ENCODE measurements at regions of chr19 and their contacts with region 1.

Region 1: DNA sequence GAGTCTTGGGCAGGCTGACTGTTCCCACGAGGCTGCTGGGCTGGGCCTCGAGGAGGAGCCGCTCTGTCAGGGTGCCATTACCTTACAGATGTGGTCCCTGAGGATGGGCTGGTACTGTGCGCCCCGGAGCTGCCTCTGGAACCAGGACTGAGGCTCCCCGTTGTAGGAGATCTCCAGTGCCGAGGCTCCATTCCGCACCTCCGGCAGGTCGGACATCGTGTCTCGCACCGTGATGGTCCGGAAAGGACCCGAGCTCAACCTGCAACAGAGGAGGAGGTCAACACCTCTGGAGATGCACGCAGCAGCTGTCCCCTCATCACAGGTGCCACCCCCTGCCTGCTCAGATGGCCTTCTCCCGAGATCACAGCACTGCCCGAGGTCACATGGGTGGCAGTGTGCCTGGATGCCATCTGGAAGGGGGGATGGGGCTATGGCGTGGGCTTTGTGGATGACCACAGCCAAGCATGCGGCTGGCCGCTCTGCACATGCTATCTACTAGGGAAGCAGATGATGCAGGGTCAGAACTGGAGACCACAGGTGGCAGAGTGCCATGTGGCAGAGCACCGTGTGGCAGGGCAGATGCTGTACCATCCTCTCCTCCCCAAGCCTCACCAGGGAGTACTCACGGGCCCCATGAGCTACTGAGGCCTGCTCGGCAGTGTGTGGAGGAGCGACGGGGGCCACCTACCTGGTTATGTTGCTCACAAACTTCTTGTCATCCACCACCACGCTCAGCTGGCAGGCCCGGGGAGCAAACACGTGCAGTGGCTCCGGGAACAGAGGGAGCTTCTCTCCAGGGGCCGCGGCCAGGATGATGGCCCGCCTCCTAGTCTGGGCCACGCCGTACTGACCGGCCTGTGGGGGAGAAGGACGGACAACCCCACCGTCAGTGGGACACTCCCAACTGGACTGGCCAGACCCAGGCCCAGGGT is 18.3 kb upstream of the EIF3G start:
- DNase-seq: peak; percentile 81
- H3K4me3 ChIP-seq: no peak overlapping the region
- H3K27ac ChIP-seq: peak overlapping the region in 1 of 2 experiments; percentile 99; a peak in 2 of 4 replicates
- H3K4me1 ChIP-seq: peaks cover 0 to 33% of the 10 kb centered on the region in 2 experiments; a peak in 1 of 4 replicates
- H3K27me3 ChIP-seq: no peaks in the 10 kb centered on the region
- CTCF ChIP-seq: no peak
- EP300 ChIP-seq: peak in 1 of 2 experiments; percentile 78; a peak in 2 of 4 replicates
- RAD21 ChIP-seq: no peak

Region 2: DNA sequence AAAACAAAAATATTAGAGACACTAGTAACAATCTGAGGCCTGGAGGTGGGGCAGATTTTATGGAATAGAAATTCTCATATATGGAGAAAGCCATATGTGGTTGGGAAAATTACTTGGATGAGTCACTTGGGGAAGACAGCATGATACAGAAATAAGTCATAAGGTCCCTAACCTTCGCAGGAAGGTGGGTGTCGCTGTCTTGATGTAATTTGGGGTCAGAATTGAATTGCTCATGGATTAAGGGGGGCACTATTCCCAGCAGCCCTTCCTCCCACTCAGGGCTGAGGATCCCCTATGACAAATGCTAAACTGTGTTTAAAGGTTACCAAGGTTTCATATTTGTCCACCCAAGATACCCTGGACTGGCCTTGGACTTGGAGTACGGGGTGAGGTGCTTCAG is 119.8 kb before region 1 on chr19:
- CTCF ChIA-PET with region 1: no interaction called
- POLR2A ChIA-PET with region 1: no interaction called
- DNase-seq: no peak
- H3K4me3 ChIP-seq: no peak overlapping the region
- H3K27ac ChIP-seq: no peak overlapping the region
- H3K4me1 ChIP-seq: no peaks in the 10 kb centered on the region
- H3K27me3 ChIP-seq: peaks cover 23% of the 10 kb centered on the region; the same call in 1 of the 2 replicates
- CTCF ChIP-seq: no peak
- EP300 ChIP-seq: no peak
- RAD21 ChIP-seq: no peak

Region 3: DNA sequence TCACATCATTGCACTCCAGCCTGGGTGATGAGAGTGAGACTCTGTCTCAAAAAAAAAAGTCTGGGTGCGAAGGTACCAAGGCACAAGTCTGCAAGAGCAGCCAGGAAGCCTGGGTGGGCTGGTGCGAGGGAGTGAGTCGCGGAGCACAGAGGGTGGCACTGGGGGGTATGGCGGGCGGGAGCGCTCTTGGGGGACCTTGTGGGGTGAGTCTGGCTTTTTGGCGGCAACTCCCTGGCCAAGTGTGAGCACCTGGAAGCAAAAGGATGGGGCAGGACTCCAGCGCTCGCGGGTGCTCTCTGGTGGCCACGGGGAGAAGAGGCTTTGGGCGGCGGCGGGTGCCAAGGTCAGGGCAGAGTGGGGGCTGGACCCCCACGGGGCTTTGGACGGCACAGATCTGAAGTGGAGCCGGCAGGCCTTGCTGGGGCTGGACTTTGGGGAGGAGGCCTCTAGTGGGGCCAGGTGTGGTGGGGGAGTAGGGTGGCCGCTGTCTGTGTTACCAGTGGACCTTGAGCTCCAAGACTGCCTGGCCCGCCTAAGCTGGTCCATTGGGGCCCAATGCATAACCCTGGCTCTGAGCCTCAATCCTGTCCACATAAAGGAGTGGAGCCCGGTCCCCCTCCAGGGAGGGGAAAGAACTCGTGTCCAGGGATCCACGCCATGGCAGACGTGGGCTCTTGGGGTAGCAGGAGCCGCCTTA is 25.0 kb before region 1 on chr19:
- CTCF ChIA-PET with region 1: interaction called, 3 read pairs
- POLR2A ChIA-PET with region 1: interaction called, 13 read pairs
- DNase-seq: peak; percentile 75
- H3K4me3 ChIP-seq: no peak overlapping the region; a peak in 1 of 4 replicates
- H3K27ac ChIP-seq: no peak overlapping the region; a peak in 1 of 4 replicates
- H3K4me1 ChIP-seq: peaks cover 0 to 5% of the 10 kb centered on the region in 2 experiments; a peak in 1 of 4 replicates
- H3K27me3 ChIP-seq: no peaks in the 10 kb centered on the region
- CTCF ChIP-seq: peak; percentile 52
- EP300 ChIP-seq: no peak
- RAD21 ChIP-seq: 0 out of 2 replicates have a peak, but pooled peaks have one; percentile 15

Region 4: DNA sequence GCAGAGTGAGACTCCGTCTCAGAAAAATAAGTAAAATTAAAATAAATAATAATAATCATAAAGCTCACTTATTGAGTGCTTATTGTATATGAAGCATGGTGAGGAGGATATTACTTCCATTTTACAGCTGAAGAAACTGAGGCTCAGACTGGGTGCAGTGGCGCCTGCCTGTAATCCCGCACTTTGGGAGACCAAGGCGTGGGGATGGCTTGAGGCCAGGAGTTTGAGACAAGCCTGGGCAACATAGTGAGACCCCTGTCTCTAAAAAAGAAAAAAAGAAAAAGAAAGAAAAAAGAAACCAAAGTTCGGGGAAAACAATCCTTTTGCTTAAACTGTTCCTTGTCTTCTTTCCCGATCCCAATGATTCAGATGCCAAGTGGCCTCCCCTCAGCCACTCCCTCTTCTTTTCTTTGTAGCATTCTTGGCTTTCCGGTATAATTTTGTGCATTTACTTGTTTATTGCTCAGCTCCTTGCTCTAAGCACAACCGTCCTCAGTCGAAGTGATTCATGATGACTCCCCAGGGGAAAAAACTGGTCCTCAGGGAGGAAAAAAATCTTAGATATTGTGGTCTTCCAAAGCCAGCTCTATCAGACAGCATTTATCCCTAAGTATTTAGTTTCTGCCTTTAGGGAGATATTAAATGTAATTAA is 17.4 kb before region 1 on chr19:
- CTCF ChIA-PET with region 1: interaction called, 11 read pairs
- POLR2A ChIA-PET with region 1: interaction called, 21 read pairs
- DNase-seq: no peak
- H3K4me3 ChIP-seq: no peak overlapping the region
- H3K27ac ChIP-seq: peak overlapping the region in 1 of 2 experiments; percentile 76; a peak in 3 of 4 replicates
- H3K4me1 ChIP-seq: peaks cover 3 to 13% of the 10 kb centered on the region in 2 experiments; a peak in 1 of 4 replicates
- H3K27me3 ChIP-seq: no peaks in the 10 kb centered on the region
- CTCF ChIP-seq: no peak
- EP300 ChIP-seq: no peak
- RAD21 ChIP-seq: no peak

Region 5: DNA sequence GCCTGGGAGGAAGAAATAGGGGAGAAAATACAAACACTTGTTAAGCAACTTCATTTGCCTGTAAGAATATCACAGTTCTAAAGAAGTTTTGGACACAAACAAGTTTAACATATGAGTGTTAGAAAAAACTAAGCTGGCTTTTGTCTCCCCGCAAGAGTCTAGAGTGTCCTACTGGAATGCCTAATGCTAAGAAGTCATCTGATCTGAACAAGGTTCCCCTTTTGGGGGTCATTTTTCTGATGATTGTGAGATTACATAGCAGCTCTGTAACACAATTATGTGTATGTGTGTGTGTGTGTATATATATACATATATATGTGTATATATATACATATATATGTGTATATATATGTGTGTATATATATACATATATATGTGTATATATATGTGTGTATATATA is 44.1 kb after region 1 on chr19:
- CTCF ChIA-PET with region 1: no interaction called
- POLR2A ChIA-PET with region 1: no interaction called
- DNase-seq: no peak
- H3K4me3 ChIP-seq: no peak overlapping the region
- H3K27ac ChIP-seq: no peak overlapping the region
- H3K4me1 ChIP-seq: no peaks in the 10 kb centered on the region; a peak in 1 of 4 replicates
- H3K27me3 ChIP-seq: no peaks in the 10 kb centered on the region
- CTCF ChIP-seq: no peak
- EP300 ChIP-seq: no peak
- RAD21 ChIP-seq: no peak

Region 6: DNA sequence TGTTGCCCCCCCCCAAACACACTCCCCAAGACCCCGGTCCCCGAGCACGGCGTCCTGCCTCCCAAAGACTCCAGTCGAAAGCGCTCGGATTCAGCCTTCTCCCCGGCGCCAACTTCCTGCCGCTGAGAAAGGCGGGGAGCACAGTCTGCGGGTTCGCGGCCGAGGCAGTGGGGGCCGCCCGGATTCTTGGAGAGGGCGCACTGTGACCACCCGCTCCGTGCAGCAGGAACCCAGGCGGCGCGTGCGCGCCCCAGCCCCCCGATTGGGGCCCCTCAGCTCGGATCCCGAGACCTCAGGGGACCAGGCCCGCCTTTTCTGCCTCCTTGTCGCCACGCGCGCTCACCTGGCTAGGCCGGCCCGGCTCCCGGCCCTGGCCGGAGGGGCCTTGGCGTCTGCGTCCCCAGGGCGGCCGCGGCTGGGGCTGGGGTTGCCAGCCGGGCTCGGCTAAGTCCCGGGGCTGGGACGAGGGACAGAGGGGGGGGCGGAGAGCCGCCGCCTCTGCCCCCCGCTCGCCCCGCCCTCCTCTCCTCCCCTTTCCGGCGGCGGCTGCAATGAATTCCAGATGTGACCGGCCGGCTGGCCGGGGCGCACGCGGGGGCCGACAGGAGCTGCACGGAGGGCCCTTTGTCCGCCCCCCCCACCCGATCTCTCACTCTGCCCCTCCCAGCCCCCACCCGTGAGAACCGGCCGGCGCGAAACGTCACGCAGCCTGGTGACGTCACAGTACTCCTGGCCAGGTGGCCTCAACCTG is 93.0 kb after region 1 on chr19 and contains the start of gene S1PR2:
- CTCF ChIA-PET with region 1: interaction called, 15 read pairs
- POLR2A ChIA-PET with region 1: interaction called, 4 read pairs
- DNase-seq: peak; percentile 97
- H3K4me3 ChIP-seq: peak within 1 kb of the TSS; percentile 72 to 98
- H3K27ac ChIP-seq: peak within 1 kb of the TSS; percentile 54 to 88; a peak in 3 of 4 replicates
- H3K4me1 ChIP-seq: peaks cover 0 to 25% of the 10 kb centered on the region in 2 experiments; a peak in 1 of 4 replicates
- H3K27me3 ChIP-seq: no peaks in the 10 kb centered on the region
- CTCF ChIP-seq: no peak
- EP300 ChIP-seq: no peak; a peak in 1 of 4 replicates
- RAD21 ChIP-seq: no peak
- polyA plus RNA-seq, gene S1PR2: 3.6 and 3.8 TPM in 2 replicates

Region 7: DNA sequence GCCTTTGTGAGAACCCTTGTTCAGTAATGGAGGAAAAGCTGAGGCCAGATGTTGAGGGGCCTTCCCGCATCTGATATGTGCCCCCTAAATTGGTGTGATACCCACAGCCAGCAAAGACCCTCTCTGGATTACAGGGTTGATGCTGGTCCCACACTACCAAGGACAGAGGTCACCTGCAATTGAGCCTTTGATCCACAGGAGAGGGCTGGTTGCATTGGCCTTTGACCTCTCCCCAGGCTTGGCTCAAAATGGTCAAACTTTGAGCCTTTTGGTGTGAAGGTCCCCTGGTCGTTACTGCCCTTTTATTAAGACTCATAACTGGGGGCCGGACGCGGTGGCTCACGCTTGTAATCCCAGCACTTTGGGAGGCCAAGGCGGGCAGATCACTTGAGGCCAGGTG is 105.6 kb after region 1 on chr19:
- CTCF ChIA-PET with region 1: no interaction called
- POLR2A ChIA-PET with region 1: no interaction called
- DNase-seq: no peak
- H3K4me3 ChIP-seq: no peak overlapping the region
- H3K27ac ChIP-seq: no peak overlapping the region
- H3K4me1 ChIP-seq: no peaks in the 10 kb centered on the region
- H3K27me3 ChIP-seq: no peaks in the 10 kb centered on the region
- CTCF ChIP-seq: no peak
- EP300 ChIP-seq: no peak
- RAD21 ChIP-seq: no peak